ENCODE measurements at regions of chrX and their contacts with region 1.

Region 1: DNA sequence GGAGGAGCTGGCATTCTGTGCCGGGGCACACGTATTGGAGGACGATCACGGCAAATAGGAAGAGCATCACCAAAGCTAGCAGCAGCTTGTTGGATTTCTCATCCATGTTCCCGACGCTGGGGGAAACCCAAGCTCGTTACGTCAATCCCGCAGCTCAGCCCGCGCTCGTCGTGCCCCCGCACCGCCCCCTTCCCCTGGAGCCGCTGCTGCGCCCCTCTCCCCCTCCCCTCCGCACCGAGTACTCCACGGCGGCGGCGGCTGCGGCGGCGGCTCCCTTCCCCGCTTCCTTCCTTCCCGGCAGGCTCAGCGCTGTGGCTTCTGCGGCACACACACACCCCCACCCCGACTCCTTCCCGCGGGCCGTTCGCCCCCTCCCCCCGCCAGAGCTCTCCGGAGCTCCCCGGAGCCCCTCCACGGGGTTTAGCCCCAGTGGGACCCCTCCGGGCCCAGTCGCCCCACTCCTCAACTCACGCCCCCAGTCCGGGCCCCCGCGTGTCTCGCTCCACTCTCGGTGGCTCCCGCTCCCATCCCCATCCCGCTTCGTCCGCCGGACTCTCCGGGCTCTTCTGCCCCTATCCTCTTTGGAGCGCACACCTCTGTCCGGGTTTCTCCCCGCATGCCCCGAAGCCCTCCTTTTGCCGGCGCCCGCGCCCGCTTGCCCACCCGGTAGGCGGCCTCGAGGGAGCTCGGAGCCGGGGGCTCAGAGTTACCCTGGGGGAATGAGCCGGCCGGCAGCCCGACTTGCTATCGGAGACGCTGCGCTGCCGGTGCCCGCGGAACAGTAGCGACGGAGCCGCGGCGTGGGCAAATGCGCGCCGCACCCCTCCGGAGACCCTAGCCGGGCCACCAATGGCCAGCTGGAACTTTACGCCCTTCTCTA is 978 bp downstream of the HS6ST2 start:
- DNase-seq: peak; percentile 58
- H3K4me3 Mint-ChIP-seq: peak overlapping the region; percentile 79
- H3K27ac Mint-ChIP-seq: peak overlapping the region; percentile 74
- H3K4me1 Mint-ChIP-seq: peaks cover 3% of the 10 kb centered on the region
- H3K27me3 Mint-ChIP-seq: peaks cover 44% of the 10 kb centered on the region

Region 2: DNA sequence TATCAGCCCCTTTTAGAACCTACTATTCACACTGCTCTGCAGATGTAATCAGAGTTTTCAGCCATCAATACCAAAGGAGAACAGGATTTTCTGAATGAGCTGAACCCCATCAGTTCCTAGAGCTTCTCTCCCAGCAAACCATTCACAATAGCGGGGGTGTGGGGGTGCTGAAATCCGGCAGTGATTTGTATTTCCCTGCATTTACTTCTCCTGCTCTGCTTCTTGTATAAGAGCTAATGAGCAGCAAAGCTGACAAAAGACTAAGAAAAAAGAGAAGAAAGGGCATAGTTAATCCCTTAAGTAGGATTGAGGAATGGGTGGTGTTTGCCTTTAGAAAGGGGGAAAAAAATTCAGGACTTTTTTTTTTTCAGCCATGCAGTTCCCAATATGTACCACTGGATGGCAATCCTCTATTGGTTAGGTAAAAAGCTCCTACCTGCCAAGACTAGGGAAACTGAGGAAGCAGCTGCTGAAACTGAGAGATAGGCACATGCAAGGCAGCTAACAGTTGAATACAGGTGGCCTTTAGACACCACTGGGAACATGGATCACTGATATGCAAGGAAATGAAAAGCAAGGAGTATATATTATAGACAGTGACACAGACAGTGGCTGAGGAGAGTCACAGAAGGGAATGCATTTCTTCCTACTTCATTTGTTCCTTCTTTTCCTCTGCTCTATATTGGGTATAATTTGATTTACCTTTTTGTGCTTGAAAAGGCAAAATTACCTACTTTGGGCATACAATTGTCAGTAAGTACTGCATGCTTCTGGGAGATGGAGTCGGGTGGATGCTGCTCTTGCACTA is 216.9 kb before region 1 on chrX:
- intact Hi-C with region 1: loop called (anchors 5 kb)
- DNase-seq: no peak
- H3K4me3 Mint-ChIP-seq: no peak overlapping the region
- H3K27ac Mint-ChIP-seq: no peak overlapping the region
- H3K4me1 Mint-ChIP-seq: peaks cover 19% of the 10 kb centered on the region
- H3K27me3 Mint-ChIP-seq: no peaks in the 10 kb centered on the region

Measured in activated CD4-positive, alpha-beta T cell treated with anti-CD3 and anti-CD28 coated beads, Interleukin-2, amount 10 ng/mL, durations not matched to agents 24 days and 14 days (primary cell).